Heart left ventricle (tissue), 16 donors: ENCODE measurements at regions of chr13 and their contacts with region 1.

Region 1: GRCh38 chr13:97109841-97110492 is 112.2 kb upstream of the MBNL2 start:
- DNase-seq: peak; percentile 90 to 96 (median 93)
- ATAC-seq: peak; percentile 95 to 98 (median 98)
- H3K4me3 ChIP-seq: peak overlapping the region in 8 of 12 donors; percentile 15 to 52 (median 20)
- H3K27ac ChIP-seq: peak overlapping the region in 6 of 12 donors; percentile 9 to 77 (median 46)
- H3K4me1 ChIP-seq: peaks cover 0 to 31% (median 22%) of the 10 kb centered on the region in 12 donors
- H3K27me3 ChIP-seq: peaks cover 0 to 10% (median 0%) of the 10 kb centered on the region in 9 donors
- CTCF ChIP-seq: peak; percentile 96 to 100 (median 98)
- POLR2A ChIP-seq: no peak

Region 2: DNA sequence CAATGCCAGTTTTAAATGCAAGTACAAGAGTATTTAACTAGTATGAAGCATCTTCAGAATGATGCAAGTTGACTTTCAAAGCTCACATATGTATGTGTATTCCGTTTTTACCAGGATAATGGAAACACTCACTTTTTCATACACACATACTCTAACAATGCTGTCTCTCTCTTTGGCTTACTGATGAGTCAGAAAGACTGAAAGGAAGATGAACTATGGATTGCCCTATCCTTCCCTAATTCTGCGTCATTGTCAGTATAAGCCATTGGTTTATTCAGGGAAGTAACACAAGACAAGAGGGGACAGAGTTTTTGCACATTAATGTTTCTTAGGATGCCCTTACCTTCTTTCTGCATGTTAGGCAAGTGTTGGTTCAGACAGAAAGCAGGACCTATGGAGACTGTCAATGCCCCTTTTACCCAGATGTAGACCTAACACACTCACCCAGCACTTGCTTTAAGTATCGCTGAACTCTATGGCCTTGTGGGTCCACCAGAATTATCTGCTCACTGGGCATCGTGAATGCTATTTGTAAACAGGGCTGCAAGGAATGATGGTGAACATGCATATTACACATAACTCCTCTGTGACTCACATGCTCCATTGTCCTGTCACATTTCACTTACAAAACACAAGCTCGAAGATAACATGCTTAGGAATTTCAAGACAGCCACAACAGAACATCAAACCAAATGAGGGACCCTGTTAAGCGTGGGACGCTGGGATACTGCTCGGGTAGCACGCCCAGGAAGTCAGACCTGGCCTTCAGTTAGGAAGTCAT is 105.7 kb before region 1 on chr13:
- intact Hi-C with region 1: no loop called
- DNase-seq: no peak
- ATAC-seq: peak in 3 of 4 donors; percentile 24 to 49 (median 45)
- H3K4me3 ChIP-seq: no peak overlapping the region
- H3K27ac ChIP-seq: no peak overlapping the region
- H3K4me1 ChIP-seq: peaks cover 0 to 37% (median 0%) of the 10 kb centered on the region in 12 donors
- H3K27me3 ChIP-seq: peaks cover 0 to 6% (median 0%) of the 10 kb centered on the region in 9 donors
- CTCF ChIP-seq: no peak
- POLR2A ChIP-seq: no peak

Region 3: GRCh38 chr13:97091196-97091595 is 18.8 kb before region 1 on chr13:
- intact Hi-C with region 1: no loop called
- DNase-seq: no peak
- ATAC-seq: no peak
- H3K4me3 ChIP-seq: no peak overlapping the region
- H3K27ac ChIP-seq: no peak overlapping the region
- H3K4me1 ChIP-seq: no peaks in the 10 kb centered on the region
- H3K27me3 ChIP-seq: no peaks in the 10 kb centered on the region
- CTCF ChIP-seq: no peak
- POLR2A ChIP-seq: no peak

Region 4: DNA sequence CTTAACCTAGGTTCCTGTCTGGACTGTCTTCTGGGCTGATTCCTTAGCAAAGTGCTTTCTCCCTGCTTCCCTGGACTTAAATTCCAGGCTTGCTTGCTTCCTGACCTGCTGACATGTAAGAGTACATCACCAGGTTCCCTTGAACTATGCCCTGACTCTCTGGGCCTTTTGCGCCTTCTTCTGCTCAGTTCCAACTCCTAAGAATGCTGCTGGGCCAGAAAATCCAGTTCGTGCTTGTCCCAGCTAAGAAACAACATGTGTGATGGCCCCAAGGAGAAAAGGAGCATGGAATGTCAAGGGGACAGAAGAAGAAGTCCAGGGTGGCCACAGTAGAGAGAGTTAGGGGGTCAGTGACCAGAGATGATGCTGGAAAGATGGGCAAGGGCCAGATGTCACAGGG is 69.5 kb after region 1 on chr13:
- intact Hi-C with region 1: no loop called
- DNase-seq: no peak
- ATAC-seq: no peak
- H3K4me3 ChIP-seq: no peak overlapping the region
- H3K27ac ChIP-seq: no peak overlapping the region
- H3K4me1 ChIP-seq: no peaks in the 10 kb centered on the region
- H3K27me3 ChIP-seq: no peaks in the 10 kb centered on the region
- CTCF ChIP-seq: no peak
- POLR2A ChIP-seq: no peak

Region 5: DNA sequence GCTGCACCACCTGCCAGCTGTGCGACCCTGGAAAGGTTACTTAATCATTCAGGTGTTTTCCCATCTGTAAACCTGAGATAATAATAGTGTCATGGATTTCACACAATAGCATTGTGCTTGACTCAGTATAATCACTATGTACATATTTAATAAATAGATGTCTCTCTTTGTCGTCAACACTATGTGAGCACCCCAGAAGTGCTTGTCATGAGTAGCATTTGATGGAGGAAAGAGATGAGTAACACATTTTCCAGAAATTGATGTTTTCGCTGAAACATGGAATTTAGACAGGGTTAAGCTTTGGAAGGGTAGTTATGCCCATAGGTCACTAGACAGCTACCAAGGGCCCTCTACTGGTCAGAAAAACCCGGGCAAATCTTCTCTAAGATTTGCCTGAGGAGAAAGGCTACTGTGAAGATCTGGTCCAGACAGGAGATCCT is 102.7 kb after region 1 on chr13:
- intact Hi-C with region 1: loop called in 7 of 10 experiments (anchors 1 to 5 kb)
- DNase-seq: no peak
- ATAC-seq: peak in 3 of 4 donors; percentile 52 to 75 (median 72)
- H3K4me3 ChIP-seq: no peak overlapping the region
- H3K27ac ChIP-seq: no peak overlapping the region
- H3K4me1 ChIP-seq: peaks cover 0 to 21% (median 0%) of the 10 kb centered on the region in 12 donors
- H3K27me3 ChIP-seq: peaks cover 0 to 2% (median 0%) of the 10 kb centered on the region in 9 donors
- CTCF ChIP-seq: peak; percentile 28 to 57 (median 48)
- POLR2A ChIP-seq: no peak

Region 6: GRCh38 chr13:97344265-97345175 is 234.6 kb after region 1 on chr13:
- intact Hi-C with region 1: loop called (anchors 1 to 5 kb)
- DNase-seq: peak in 4 of 5 donors; percentile 51 to 71 (median 58)
- ATAC-seq: peak; percentile 63 to 83 (median 81)
- H3K4me3 ChIP-seq: no peak overlapping the region
- H3K27ac ChIP-seq: peak overlapping the region in 6 of 12 donors; percentile 2 to 50 (median 17)
- H3K4me1 ChIP-seq: peaks cover 6 to 52% (median 21%) of the 10 kb centered on the region in 12 donors
- H3K27me3 ChIP-seq: no peaks in the 10 kb centered on the region
- CTCF ChIP-seq: peak; percentile 58 to 82 (median 74)
- POLR2A ChIP-seq: no peak

Region 7: GRCh38 chr13:97659602-97660001 is 549.6 kb after region 1 on chr13:
- intact Hi-C with region 1: loop called in 2 of 10 experiments (anchors 10 kb)
- DNase-seq: peak in 1 of 5 donors; percentile 11
- ATAC-seq: peak in 3 of 4 donors; percentile 50 to 62 (median 52)
- H3K4me3 ChIP-seq: no peak overlapping the region
- H3K27ac ChIP-seq: no peak overlapping the region
- H3K4me1 ChIP-seq: peaks cover 0 to 13% (median 0%) of the 10 kb centered on the region in 12 donors
- H3K27me3 ChIP-seq: no peaks in the 10 kb centered on the region
- CTCF ChIP-seq: peak; percentile 20 to 60 (median 44)
- POLR2A ChIP-seq: no peak

Region 8: DNA sequence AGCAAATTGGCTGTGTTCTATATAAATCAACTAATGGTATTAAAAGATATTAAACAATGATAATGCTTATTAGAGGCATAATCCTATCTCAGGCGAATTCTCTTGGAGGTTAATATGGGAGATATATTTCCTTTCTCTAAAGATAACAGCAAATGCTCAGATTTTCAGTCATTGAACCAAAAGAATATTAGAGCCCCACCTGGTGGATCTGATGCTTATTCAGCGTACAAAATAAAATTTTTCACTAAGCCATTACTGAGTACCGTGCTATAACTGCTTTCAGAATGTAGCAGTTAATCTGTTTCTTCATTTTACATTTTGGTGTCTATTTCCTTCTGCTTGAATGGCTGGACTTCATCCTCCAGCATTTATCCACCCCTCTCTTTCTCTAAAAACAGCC is 700.2 kb after region 1 on chr13:
- intact Hi-C with region 1: loop called in 1 of 10 experiments (anchors 10 kb)
- DNase-seq: no peak
- ATAC-seq: no peak
- H3K4me3 ChIP-seq: no peak overlapping the region
- H3K27ac ChIP-seq: no peak overlapping the region
- H3K4me1 ChIP-seq: no peaks in the 10 kb centered on the region
- H3K27me3 ChIP-seq: no peaks in the 10 kb centered on the region
- CTCF ChIP-seq: peak in 10 of 12 donors; percentile 15 to 54 (median 34)
- POLR2A ChIP-seq: no peak